ENCODE measurements at regions of chr1 and their contacts with region 1.

Region 1: DNA sequence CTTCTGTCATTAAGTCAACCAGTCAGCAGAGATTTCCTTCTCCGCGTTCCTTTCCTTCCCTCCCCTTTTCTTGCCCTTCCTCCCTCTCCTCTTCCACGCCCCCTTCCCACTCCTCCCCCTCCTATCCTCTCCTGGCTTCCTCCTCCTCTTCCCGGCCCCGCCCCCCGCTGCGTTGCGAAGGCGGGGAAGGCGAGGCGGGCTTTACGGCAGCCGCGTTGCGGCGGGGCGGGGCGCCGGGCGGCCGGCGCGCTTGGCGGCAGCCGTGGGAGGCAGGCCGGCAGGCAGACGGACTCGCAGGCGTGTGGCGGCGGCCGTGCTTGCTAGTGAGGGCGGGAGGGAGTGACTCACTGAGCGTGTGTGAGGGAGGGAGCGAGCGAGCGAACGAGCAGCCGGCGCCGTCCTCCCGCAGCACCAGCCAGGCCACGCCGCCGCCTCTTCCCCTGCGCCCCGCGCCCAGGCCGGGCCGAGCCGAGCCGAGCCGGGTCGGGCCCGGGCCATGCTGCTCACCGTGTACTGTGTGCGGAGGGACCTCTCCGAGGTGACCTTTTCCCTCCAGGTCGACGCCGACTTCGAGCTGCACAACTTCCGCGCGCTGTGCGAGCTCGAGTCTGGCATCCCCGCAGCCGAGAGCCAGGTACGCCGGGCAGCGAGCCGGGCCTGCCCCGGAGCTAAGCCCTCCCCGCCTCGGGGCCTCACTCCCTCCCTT is at the start of gene DDI2:
- DNase-seq: peak; percentile 94
- H3K4me3 Mint-ChIP-seq: peak within 1 kb of the TSS; percentile 96
- H3K27ac Mint-ChIP-seq: peak within 1 kb of the TSS; percentile 93
- H3K4me1 Mint-ChIP-seq: peaks cover 43% of the 10 kb centered on the region
- H3K27me3 Mint-ChIP-seq: no peaks in the 10 kb centered on the region
- total RNA-seq, gene DDI2: 49.9 and 51.4 TPM in 2 replicates

Region 2: GRCh38 chr1:15578921-15579682 is 38.2 kb before region 1 on chr1:
- intact Hi-C with region 1: loop called (anchors 1 kb)
- DNase-seq: peak; percentile 37
- H3K4me3 Mint-ChIP-seq: peak overlapping the region; percentile 75
- H3K27ac Mint-ChIP-seq: peak overlapping the region; percentile 90
- H3K4me1 Mint-ChIP-seq: peaks cover 48% of the 10 kb centered on the region
- H3K27me3 Mint-ChIP-seq: no peaks in the 10 kb centered on the region

Region 3: DNA sequence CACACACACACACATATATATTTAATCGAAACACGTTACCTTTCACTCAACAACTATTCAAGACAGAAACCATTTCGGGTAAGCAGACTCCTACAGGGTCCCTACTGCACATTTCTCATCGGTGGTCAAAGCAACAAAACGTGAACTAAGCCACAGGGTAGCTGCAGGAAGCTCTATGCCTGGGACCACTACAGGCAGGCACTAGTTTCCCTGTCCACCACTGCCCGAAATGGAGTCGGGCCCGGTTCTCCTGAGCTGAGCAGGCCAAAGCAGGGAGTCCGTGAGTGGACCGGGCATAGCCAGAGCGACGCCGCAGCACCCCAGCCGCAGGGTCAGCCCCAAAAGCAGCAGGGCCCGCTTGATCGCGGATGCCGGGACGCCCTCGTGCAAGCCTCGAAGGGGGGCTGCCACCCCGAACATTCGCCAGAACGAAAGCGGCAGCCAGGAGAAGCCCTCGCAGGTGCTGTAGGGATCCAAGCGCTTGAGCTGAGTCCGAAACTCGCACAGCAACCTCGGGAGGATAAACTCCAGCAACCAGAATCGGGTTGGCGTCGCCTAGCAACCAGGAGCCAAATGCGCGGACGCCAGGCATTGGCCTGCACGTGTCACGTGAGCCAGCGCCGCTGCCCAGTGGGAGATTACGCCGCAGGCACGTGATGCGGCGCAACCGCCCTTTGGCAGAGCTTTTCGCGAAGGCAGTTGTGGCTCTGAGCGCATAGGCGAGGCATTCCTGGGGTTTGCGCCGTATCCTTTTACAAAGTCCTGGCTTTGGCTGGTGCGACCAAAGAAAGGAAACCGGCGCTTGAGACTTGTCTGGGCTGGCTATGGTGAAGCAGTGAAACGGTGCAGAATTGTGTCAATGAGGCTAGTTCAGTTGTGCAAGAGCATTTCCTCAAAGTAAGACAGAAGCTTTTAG is 14.0 kb before region 1 on chr1:
- intact Hi-C with region 1: loop called (anchors 1 kb)
- DNase-seq: peak; percentile 91
- H3K4me3 Mint-ChIP-seq: peak overlapping the region; percentile 80
- H3K27ac Mint-ChIP-seq: peak overlapping the region; percentile 55
- H3K4me1 Mint-ChIP-seq: peaks cover 6% of the 10 kb centered on the region
- H3K27me3 Mint-ChIP-seq: no peaks in the 10 kb centered on the region

Region 4: DNA sequence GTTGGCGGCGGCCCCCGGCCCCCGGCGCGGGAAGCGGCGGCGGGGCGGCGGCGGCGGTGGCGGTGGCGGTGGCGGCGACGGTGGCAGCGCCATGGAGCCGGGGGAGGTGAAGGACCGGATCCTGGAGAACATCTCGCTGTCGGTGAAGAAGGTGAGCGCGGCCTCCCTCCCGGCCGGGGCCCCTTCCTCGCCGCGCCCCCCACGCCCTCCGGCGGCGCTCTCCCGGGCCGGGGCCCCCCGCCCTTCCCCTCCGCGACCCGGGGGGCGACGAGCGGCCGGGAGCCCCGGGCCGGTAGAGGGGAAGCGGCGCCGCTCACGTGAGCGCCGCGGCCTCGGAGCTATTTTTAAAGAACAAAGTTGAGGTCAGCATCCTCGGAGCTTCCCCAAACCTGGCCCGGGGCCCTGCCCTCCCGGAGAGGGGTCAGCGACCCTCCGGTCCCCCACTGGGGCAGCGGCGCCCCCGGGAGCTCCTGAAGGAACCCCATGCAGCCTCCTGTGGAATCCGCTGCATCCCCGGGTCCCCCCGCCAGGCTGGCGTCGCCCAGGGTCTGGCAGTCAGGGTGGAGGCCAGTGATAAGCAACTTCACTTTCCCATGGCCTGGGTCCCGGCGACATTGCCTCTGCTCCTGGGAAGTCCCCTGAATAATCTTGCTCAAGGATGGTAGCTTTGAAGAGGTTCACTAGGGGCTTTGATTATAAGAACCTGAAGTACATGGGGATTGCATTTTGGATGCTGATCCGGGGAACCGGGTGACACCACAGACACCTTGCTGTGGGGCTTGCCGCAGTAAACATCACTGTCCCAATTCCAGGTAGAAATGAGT is 67.4 kb after region 1 on chr1:
- intact Hi-C with region 1: loop called (anchors 1 kb)
- DNase-seq: peak; percentile 18
- H3K4me3 Mint-ChIP-seq: peak overlapping the region; percentile 88
- H3K27ac Mint-ChIP-seq: peak overlapping the region; percentile 86
- H3K4me1 Mint-ChIP-seq: peaks cover 31% of the 10 kb centered on the region
- H3K27me3 Mint-ChIP-seq: peaks cover 2% of the 10 kb centered on the region

Region 5: DNA sequence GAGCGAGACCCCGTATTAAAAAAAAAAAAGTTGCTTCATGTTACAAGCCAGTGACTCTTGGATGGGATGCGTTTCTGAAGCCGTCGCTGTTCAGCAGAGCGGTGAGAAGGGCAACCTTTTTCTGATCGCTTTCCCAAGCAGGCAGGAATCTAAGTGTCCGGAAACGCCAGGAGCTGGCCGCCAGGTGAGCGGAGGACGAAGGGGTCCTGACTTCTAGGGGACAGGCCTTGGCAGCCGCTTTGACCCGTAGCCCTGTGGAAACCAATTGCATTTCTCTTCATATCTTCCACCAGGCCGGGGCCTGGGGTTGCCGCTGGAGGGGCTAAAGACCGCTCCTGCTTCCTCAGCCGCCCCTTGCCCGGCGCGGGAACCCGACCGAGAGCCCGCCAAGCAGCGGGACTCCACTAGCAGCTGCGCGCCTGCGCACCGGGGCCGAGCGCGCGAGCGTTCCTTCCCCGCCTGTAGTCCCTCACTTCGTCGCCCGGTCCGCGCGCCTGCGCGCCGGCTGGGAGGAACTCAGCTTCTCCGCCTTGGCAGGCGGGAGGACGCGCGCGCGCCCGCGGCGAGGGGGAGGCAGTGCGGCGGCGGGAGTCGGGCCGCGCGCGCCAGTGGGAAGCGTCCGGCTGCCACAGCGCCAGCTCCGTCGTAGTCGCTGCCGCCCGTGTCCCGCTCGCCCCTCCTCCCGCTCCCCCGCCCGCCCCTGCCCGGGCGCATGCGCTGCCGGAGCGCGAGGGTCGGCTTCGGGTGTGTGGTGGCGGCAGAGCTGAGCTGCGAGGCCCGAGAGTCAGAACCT is 230.0 kb after region 1 on chr1 and contains the start of gene SPEN:
- intact Hi-C with region 1: loop called (anchors 5 kb)
- DNase-seq: peak; percentile 98
- H3K4me3 Mint-ChIP-seq: peak within 1 kb of the TSS; percentile 94
- H3K27ac Mint-ChIP-seq: peak within 1 kb of the TSS; percentile 95
- H3K4me1 Mint-ChIP-seq: peaks cover 41% of the 10 kb centered on the region
- H3K27me3 Mint-ChIP-seq: no peaks in the 10 kb centered on the region
- total RNA-seq, gene SPEN: 81.9 and 87.6 TPM in 2 replicates

Region 6: DNA sequence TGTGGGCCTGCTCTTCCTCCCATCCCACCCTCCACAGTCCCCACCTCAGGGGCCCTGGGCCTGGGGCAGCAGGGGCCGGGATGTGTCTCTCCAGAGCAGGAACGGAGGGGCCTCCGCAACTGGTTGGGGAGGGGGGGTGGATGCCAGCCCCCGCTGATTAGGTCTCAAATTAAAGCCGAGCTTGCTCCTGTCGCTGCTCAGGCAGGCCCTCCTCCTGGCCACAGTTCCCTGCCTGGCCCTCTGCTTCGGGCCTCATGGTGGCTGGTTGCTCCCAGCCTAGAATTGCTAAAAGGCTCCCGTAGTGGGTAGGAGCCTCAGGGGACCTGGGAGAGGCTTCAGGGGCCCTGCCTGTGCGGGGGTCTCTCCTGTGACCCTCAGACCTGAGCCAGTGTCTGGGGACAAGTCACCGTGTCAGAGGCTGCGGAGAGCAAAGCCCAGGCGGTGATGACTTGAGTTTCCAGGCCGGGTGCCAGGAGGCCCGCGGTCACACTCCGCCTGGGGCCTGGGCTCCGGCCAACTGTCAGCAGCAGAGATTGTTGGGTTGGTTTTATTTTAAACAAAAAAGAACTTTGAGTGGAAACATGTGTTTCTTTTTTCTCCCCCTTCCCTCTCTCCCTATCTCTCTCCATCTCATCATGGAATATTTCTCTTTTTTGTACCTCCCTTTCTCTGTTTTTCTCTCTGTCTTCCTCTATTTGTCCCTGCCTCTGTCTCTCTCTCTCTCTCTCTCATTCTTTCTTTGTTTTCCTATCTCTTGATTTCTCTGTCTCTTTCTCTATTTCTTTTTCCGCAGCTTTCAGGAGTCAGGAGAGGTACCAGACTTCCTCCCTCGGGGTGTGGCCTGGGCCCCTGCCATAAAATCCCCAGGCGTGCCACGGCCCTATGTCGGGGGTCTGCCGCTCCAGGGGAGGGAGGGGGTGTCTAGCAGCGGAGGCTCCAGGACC is 558.6 kb after region 1 on chr1:
- intact Hi-C with region 1: no loop called
- DNase-seq: no peak
- H3K4me3 Mint-ChIP-seq: no peak overlapping the region
- H3K27ac Mint-ChIP-seq: no peak overlapping the region
- H3K4me1 Mint-ChIP-seq: no peaks in the 10 kb centered on the region
- H3K27me3 Mint-ChIP-seq: peaks cover 15% of the 10 kb centered on the region

Region 7: GRCh38 chr1:16236511-16237342 is 619.4 kb after region 1 on chr1 and contains the start of gene CPLANE2:
- intact Hi-C with region 1: loop called (anchors 5 kb)
- DNase-seq: peak; percentile 96
- H3K4me3 Mint-ChIP-seq: peak within 1 kb of the TSS; percentile 83
- H3K27ac Mint-ChIP-seq: peak within 1 kb of the TSS; percentile 87
- H3K4me1 Mint-ChIP-seq: peaks cover 26% of the 10 kb centered on the region
- H3K27me3 Mint-ChIP-seq: no peaks in the 10 kb centered on the region
- total RNA-seq, gene CPLANE2: 3.8 and 4.1 TPM in 2 replicates

Measured in activated T-helper 1 cell treated with anti-CD3 and anti-CD28 coated beads, Interleukin-12 subunit alpha, Interleukin-12 subunit beta, Interleukin-2, Interleukin-4 antibody, amounts not matched to agents 30 ng/mL and 10 ng/mL and 1 ng/mL, durations not matched to agents 14 hours and 24 hours and 36 hours (primary cell).